Endothelial cell of umbilical vein (primary cell): ENCODE measurements at regions of chr7 and their contacts with region 1.

Region 1: GRCh38 chr7:134547397-134548054 is 1.4 kb upstream of the AKR1B15 start:
- DNase-seq: peak; percentile 79
- H3K4me3 ChIP-seq: peak overlapping the region; percentile 21 to 70 (median 62)
- H3K27ac ChIP-seq: no peak overlapping the region
- H3K4me1 ChIP-seq: peaks cover 7% of the 10 kb centered on the region
- H3K27me3 ChIP-seq: peaks cover 10 to 15% of the 10 kb centered on the region in 2 experiments
- CTCF ChIP-seq: peak; percentile 78 to 90
- POLR2A ChIP-seq: no peak

Region 2: DNA sequence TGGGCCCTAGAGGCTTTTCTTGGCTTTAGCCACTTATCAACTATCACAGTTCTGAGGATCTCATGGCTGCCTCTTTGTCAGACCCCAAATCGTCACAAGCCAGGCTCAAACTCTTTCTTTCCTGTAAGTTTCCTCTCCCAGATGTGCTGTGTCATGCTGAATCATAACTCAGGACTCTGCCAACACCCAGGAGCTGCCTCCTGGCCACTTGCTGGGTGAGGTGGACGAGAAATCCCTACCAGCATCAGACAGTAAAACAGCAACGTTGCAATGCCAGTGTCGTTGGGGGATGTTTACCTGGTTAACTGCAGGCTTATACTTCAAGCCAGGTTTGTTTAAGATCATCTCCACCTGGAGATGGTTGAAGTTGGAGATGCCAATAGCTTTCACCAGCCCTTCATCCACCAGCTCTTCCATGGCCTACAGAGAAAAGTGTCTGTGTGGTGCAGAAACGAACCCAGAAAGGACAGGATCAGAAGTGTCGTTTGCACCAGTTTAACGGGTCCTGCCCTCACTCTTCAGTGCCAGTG is 98.8 kb before region 1 on chr7:
- CTCF ChIA-PET with region 1: interaction called, 16 read pairs
- POLR2A ChIA-PET with region 1: no interaction called
- dilution Hi-C with region 1: no loop called
- intact Hi-C with region 1: no loop called
- DNase-seq: peak; percentile 64
- H3K4me3 ChIP-seq: no peak overlapping the region
- H3K27ac ChIP-seq: peak overlapping the region; percentile 86
- H3K4me1 ChIP-seq: peaks cover 22% of the 10 kb centered on the region
- H3K27me3 ChIP-seq: no peaks in the 10 kb centered on the region
- CTCF ChIP-seq: no peak
- POLR2A ChIP-seq: no peak

Region 3: GRCh38 chr7:134480736-134481135 is 66.8 kb before region 1 on chr7:
- CTCF ChIA-PET with region 1: interaction called, 14 read pairs
- POLR2A ChIA-PET with region 1: no interaction called
- dilution Hi-C with region 1: no loop called
- intact Hi-C with region 1: no loop called
- DNase-seq: peak; percentile 71
- H3K4me3 ChIP-seq: no peak overlapping the region
- H3K27ac ChIP-seq: peak overlapping the region; percentile 9
- H3K4me1 ChIP-seq: peaks cover 16% of the 10 kb centered on the region
- H3K27me3 ChIP-seq: no peaks in the 10 kb centered on the region
- CTCF ChIP-seq: no peak
- POLR2A ChIP-seq: no peak

Region 4: GRCh38 chr7:134527979-134528371 is 19.6 kb before region 1 on chr7:
- CTCF ChIA-PET with region 1: interaction called, 16 read pairs
- POLR2A ChIA-PET with region 1: no interaction called
- dilution Hi-C with region 1: no loop called
- intact Hi-C with region 1: no loop called
- DNase-seq: no peak
- H3K4me3 ChIP-seq: no peak overlapping the region
- H3K27ac ChIP-seq: no peak overlapping the region
- H3K4me1 ChIP-seq: no peaks in the 10 kb centered on the region
- H3K27me3 ChIP-seq: peaks cover 4 to 16% of the 10 kb centered on the region in 2 experiments
- CTCF ChIP-seq: no peak
- POLR2A ChIP-seq: no peak

Region 5: DNA sequence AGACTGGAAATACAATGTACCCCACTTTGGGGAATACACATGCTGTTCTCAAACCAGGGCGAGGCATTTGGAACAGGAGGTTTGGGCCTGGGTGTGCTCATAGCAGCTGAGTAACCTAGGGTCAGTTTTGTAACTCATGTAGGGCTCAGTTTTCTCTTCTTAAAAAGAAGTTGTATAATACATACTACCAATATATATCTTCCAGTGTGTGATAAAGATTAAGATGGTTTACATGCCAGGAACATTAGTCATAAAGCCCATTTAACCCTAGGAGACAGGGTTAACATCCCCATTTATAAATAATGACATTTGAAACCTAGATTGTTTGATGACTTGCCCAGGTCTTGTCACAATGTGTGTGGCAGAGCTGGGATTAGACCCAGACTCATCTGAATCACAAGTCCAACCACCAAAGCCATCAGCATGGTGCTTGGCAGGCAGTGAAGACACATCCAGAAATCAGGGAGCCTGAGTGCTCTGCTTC is 14.2 kb before region 1 on chr7:
- CTCF ChIA-PET with region 1: interaction called, 16 read pairs
- POLR2A ChIA-PET with region 1: no interaction called
- dilution Hi-C with region 1: no loop called
- intact Hi-C with region 1: no loop called
- DNase-seq: no peak
- H3K4me3 ChIP-seq: no peak overlapping the region
- H3K27ac ChIP-seq: no peak overlapping the region
- H3K4me1 ChIP-seq: no peaks in the 10 kb centered on the region
- H3K27me3 ChIP-seq: peaks cover 4 to 10% of the 10 kb centered on the region in 2 experiments
- CTCF ChIP-seq: no peak
- POLR2A ChIP-seq: no peak

Region 6: DNA sequence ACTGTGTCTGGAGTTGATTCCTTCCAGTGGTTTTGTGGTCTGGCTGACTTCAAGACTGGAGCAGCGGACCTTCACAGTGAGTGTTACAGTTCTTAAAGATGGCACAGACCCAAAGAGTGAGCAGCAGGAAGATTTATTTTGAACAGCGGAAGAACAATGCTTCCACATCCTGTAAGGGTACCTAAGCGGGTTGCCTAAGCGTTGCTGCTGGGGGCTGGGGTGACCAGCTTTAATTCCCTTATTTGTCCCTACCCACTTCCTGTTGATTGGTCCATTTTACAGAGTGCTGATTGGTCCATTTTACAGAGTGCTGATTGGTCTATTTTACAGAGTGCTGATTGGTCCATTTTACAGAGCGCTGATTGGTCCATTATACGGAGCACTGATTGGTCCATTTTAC is 14.6 kb after region 1 on chr7:
- CTCF ChIA-PET with region 1: interaction called, 14 read pairs
- POLR2A ChIA-PET with region 1: no interaction called
- dilution Hi-C with region 1: no loop called
- intact Hi-C with region 1: no loop called
- DNase-seq: no peak
- H3K4me3 ChIP-seq: no peak overlapping the region
- H3K27ac ChIP-seq: no peak overlapping the region
- H3K4me1 ChIP-seq: no peaks in the 10 kb centered on the region
- H3K27me3 ChIP-seq: peaks cover 2 to 3% of the 10 kb centered on the region in 2 experiments
- CTCF ChIP-seq: no peak
- POLR2A ChIP-seq: no peak

Region 7: DNA sequence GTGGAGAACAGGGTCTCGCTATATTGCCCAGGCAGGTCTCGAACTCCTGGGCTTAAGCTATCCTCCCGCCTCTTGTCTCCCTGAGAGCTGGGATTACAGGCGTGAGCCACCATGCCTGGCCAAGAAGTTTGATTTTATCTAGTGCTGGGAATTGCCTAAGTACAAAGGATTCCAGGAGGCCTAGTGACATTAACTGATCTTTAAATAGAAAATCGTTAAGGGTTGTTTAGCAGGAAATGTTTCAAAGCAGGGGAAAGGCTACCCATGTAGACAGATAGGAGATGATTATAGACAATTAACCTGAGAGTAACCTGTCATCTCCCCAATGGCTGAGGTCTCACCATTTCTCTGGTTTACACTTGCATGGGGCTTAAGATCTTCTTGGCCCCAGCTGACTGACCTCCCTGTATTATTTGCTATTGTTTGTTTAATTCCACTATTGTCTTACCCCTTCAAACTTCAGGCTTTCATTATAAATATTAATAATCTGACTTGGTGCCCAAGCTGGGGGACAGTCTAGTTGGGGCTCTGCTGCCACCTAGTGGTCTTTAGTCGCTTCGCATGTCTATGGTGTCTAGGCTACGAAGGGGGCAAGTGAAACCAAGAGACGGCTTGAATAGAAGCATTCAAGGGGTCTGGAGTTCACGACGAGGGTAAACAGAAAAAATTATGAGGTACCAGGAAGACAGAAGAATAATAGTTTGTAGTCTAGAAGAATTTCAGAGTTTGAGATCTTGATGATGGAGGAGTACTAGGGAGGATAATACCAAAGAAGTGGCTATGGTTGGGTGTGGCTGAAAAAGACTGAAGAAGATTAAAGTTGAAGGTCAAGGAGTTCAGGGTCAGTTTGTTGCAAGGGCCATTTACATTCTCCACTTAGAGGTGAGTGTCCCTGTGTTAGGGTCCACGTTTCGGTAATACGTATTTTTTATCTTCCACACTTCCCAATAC is 58.7 kb after region 1 on chr7:
- CTCF ChIA-PET with region 1: interaction called, 23 read pairs
- POLR2A ChIA-PET with region 1: no interaction called
- dilution Hi-C with region 1: no loop called
- intact Hi-C with region 1: loop called (anchors 1 kb)
- DNase-seq: peak; percentile 80
- H3K4me3 ChIP-seq: no peak overlapping the region
- H3K27ac ChIP-seq: no peak overlapping the region
- H3K4me1 ChIP-seq: peaks cover 10% of the 10 kb centered on the region
- H3K27me3 ChIP-seq: no peaks in the 10 kb centered on the region
- CTCF ChIP-seq: peak; percentile 81 to 86
- POLR2A ChIP-seq: no peak